Heart right ventricle (tissue), 16 donors: ENCODE measurements at regions of chr20 and their contacts with region 1.

Region 1: DNA sequence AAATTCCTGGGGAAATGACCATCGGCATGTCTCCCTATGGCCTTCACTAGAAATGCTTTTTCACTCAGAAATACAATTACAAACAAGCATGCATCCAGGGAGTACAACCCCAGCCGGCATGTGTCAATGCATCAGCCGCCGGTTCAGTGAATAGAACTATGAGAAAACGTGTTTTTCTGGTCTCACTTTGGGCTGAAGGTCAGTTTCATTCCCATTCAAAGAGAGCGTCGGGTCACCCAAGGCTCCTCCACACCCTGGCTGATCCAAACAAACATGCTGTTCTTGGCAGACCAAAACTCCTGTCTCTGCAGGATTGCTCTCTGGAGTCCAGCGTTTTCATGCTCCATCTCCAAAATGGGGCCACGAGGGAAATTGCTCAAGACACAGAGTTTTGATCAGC is 35.5 kb upstream of the NXT1 start:
- DNase-seq: no peak
- ATAC-seq: peak; percentile 30 to 86 (median 64)
- H3K4me3 ChIP-seq: no peak overlapping the region
- H3K27ac ChIP-seq: peak overlapping the region in 1 of 10 donors; percentile 48
- H3K4me1 ChIP-seq: peaks cover 0 to 29% (median 0%) of the 10 kb centered on the region in 9 donors
- H3K27me3 ChIP-seq: peaks cover 0 to 3% (median 0%) of the 10 kb centered on the region in 7 donors
- CTCF ChIP-seq: no peak

Region 2: GRCh38 chr20:23257848-23258746 is 57.0 kb before region 1 on chr20:
- intact Hi-C with region 1: loop called in 1 of 10 experiments (anchors 10 kb)
- DNase-seq: peak in 1 of 2 donors; percentile 58
- ATAC-seq: peak; percentile 82 to 91 (median 90)
- H3K4me3 ChIP-seq: no peak overlapping the region
- H3K27ac ChIP-seq: peak overlapping the region; percentile 66 to 89 (median 80)
- H3K4me1 ChIP-seq: peaks cover 17 to 46% (median 30%) of the 10 kb centered on the region in 9 donors
- H3K27me3 ChIP-seq: peaks cover 0 to 13% (median 0%) of the 10 kb centered on the region in 7 donors
- CTCF ChIP-seq: no peak

Region 3: GRCh38 chr20:23361598-23362384 is 46.7 kb after region 1 on chr20 and contains the start of gene GZF1:
- intact Hi-C with region 1: no loop called
- DNase-seq: peak; percentile 97 to 99
- ATAC-seq: peak; percentile 85 to 95 (median 90)
- H3K4me3 ChIP-seq: peak within 1 kb of the TSS; percentile 64 to 93 (median 87)
- H3K27ac ChIP-seq: peak within 1 kb of the TSS; percentile 97 to 100 (median 100)
- H3K4me1 ChIP-seq: peaks cover 10 to 81% (median 59%) of the 10 kb centered on the region in 9 donors
- H3K27me3 ChIP-seq: no peaks in the 10 kb centered on the region
- CTCF ChIP-seq: peak in 5 of 9 donors; percentile 2 to 35 (median 13)
- total RNA-seq, gene GZF1: 20.6 to 42.7 (median 28.8) TPM